ENCODE measurements at regions of chr11 and their contacts with region 1.

Region 1: GRCh38 chr11:6377902-6378639 is 12.2 kb upstream of the SMPD1 start:
- DNase-seq: peak; percentile 53
- ATAC-seq: peak; percentile 84
- H3K4me3 Mint-ChIP-seq: peak overlapping the region; percentile 55
- H3K27ac Mint-ChIP-seq: peak overlapping the region; percentile 91
- H3K4me1 Mint-ChIP-seq: peaks cover 39% of the 10 kb centered on the region
- H3K27me3 Mint-ChIP-seq: no peaks in the 10 kb centered on the region

Region 2: GRCh38 chr11:6389921-6390724 is 12.1 kb after region 1 on chr11 and contains the start of gene SMPD1:
- CTCF ChIA-PET with region 1: interaction called, 92 read pairs
- POLR2A ChIA-PET with region 1: interaction called, 19 read pairs
- DNase-seq: peak; percentile 95
- ATAC-seq: peak; percentile 92
- H3K4me3 Mint-ChIP-seq: peak within 1 kb of the TSS; percentile 89
- H3K27ac Mint-ChIP-seq: peak within 1 kb of the TSS; percentile 95
- H3K4me1 Mint-ChIP-seq: peaks cover 57% of the 10 kb centered on the region
- H3K27me3 Mint-ChIP-seq: peaks cover 2% of the 10 kb centered on the region
- total RNA-seq, gene SMPD1: 35.5 to 37.1 TPM

Region 3: DNA sequence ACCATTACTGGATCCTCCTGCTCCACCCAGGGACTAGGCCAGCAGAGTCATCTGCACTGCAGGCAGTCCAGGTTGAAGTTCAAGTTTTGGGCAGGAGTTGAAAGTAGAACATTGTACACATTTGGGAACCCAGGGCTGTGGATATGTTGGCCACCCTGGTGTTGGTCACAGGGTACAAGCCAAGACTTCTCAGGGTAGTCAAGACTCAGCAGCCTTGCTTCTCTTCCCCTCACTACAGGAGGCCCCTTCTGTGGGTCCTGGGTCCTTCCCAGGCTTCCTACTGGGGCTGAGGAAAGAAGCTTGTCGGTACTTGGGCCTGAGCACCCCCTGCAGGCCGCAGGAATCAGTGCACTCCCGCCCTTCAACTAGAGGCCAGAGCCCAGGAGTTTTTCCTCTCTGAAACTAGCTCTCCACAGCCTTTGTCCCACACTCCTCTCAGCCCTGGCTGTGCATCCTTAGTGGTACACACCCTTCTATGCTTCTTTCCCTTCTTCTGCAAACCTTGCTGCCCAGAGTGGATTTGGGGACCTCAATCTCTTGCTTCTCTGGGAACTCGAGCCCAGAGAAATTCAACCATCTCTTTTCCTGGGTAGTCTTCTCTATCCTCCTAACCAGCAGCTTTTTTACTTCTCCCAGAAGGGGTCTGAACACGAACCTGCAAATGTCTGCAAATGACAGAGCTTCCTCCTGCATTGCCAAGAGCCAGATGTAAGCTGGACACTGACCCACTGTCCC is 65.4 kb after region 1 on chr11:
- CTCF ChIA-PET with region 1: interaction called, 657 read pairs
- POLR2A ChIA-PET with region 1: interaction called, 12 read pairs
- DNase-seq: peak; percentile 69
- ATAC-seq: peak; percentile 89
- H3K4me3 Mint-ChIP-seq: no peak overlapping the region
- H3K27ac Mint-ChIP-seq: no peak overlapping the region
- H3K4me1 Mint-ChIP-seq: no peaks in the 10 kb centered on the region
- H3K27me3 Mint-ChIP-seq: peaks cover 12% of the 10 kb centered on the region

Region 4: GRCh38 chr11:6489306-6489705 is 111.2 kb after region 1 on chr11:
- CTCF ChIA-PET with region 1: interaction called, 39 read pairs
- POLR2A ChIA-PET with region 1: no interaction called
- DNase-seq: no peak
- ATAC-seq: no peak
- H3K4me3 Mint-ChIP-seq: no peak overlapping the region
- H3K27ac Mint-ChIP-seq: no peak overlapping the region
- H3K4me1 Mint-ChIP-seq: no peaks in the 10 kb centered on the region
- H3K27me3 Mint-ChIP-seq: no peaks in the 10 kb centered on the region

Region 5: DNA sequence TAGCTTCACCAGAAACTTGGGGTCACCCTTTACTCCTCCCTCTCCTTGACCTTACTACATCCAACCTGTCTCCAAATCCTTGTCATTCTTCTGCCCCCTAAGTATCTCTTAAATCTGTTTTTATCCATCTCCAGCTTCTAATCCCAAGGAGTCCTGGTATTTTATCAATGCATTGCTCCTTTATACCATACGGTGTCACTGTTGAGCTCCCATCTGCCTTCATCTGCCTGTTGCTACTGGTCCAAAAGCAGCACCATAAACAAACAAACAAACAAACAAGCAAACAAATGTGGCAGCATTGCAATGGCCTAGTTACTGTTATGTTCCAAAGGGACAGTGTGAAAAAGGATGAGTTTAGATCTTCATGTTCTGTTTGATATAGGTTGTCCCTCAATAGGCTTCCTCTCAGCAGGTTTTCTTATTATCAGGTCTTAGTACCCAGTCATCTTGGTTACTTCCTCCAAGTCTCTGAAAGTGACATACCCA is 153.2 kb after region 1 on chr11:
- CTCF ChIA-PET with region 1: interaction called, 37 read pairs
- POLR2A ChIA-PET with region 1: no interaction called
- DNase-seq: peak; percentile 41
- ATAC-seq: peak; percentile 69
- H3K4me3 Mint-ChIP-seq: no peak overlapping the region
- H3K27ac Mint-ChIP-seq: no peak overlapping the region
- H3K4me1 Mint-ChIP-seq: peaks cover 14% of the 10 kb centered on the region
- H3K27me3 Mint-ChIP-seq: no peaks in the 10 kb centered on the region

Region 6: DNA sequence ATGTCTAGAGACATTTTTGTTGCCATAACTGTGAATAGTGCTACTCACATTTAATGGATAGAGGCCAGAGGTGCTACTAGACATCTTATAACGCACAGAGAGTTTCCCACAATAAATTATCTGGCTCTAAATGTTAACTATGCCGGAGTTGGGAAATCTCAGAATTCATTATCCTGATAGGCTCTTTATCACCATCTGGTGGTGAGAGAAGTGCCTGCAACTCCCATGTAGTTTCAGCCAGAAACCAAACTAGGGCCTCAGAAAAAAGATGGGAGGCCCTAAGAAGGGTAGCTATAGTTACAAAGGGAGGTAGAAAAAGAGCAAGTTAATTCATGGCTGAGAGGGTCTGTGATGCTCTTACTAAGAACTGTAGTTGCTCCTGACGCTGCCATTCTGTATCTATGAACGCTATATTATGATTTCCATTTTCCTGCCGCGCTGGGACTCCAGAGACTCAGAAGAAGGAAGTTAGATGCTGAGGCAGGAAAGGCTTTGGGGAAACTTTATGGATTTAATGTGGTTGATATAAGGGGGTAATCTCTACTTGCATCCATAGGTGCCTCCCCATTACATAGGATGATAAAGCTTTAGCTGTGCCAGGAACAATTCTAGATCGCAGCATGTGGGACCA is 327.9 kb after region 1 on chr11:
- CTCF ChIA-PET with region 1: interaction called, 19 read pairs
- POLR2A ChIA-PET with region 1: no interaction called
- DNase-seq: peak; percentile 53
- ATAC-seq: peak; percentile 47
- H3K4me3 Mint-ChIP-seq: no peak overlapping the region
- H3K27ac Mint-ChIP-seq: peak overlapping the region; percentile 51
- H3K4me1 Mint-ChIP-seq: peaks cover 6% of the 10 kb centered on the region
- H3K27me3 Mint-ChIP-seq: no peaks in the 10 kb centered on the region

Region 7: DNA sequence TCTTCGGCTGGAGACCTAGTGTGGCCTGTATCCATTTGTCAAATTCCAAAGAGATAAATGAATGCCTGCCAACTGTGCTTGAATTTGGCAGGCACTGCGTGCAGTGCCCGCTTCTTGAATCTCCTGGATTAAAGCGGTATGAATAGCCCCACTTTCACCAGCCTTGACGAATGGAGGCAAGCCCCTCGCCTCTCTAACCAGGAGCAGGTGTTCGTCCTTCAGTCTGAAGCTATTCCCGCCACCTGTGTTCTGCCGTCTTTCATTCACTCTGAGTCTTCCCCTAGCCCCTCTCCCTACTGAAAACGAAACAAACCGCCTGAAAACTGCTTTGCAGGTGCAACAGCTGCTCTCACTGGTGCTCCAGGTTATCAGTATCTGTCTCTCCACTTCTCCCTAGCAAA is 653.4 kb after region 1 on chr11:
- CTCF ChIA-PET with region 1: no interaction called
- POLR2A ChIA-PET with region 1: no interaction called
- DNase-seq: no peak
- ATAC-seq: no peak
- H3K4me3 Mint-ChIP-seq: no peak overlapping the region
- H3K27ac Mint-ChIP-seq: no peak overlapping the region
- H3K4me1 Mint-ChIP-seq: no peaks in the 10 kb centered on the region
- H3K27me3 Mint-ChIP-seq: peaks cover 2% of the 10 kb centered on the region

Measured in activated CD8-positive, alpha-beta T cell treated with anti-CD3 and anti-CD28 coated beads, Interleukin-2, amount 10 ng/mL, durations not matched to agents 7 days and 5 days (primary cell).